Activated CD4-positive, alpha-beta T cell treated with anti-CD3 and anti-CD28 coated beads for 36 hours (primary cell): ENCODE measurements at regions of chr20 and their contacts with region 1.

Region 1: GRCh38 chr20:59120491-59120890 is 43.1 kb upstream of the ZNF831 start:
- DNase-seq: peak; percentile 43
- ATAC-seq: peak; percentile 10
- H3K4me3 Mint-ChIP-seq: peak overlapping the region; percentile 22
- H3K27ac Mint-ChIP-seq: peak overlapping the region; percentile 71
- H3K4me1 Mint-ChIP-seq: peaks cover 78% of the 10 kb centered on the region
- H3K27me3 Mint-ChIP-seq: no peaks in the 10 kb centered on the region

Region 2: DNA sequence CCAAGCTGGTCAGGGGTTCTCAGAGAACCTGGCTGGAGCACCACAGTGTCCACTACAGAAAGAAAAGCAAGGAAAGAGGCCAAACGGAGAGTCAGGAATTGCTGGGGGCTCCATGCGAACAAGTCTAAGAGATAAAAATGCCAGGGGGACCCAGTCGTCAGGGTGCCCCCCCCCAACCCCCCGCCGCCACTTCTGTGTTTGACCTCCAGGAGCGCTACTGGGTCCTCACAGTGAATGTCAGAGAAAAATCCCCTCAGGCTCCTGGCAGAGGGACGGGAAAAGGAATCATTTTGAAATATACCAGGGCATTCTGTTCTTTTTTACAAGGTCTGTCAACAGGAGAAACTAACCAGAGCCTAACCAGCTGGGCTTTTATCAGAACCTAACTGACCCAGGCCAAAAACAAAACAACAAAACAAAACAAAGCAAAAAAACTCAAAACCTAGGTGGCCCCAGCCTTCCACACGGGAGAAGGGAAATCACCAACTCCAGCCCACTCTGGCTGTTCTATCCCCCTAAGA is 157.4 kb before region 1 on chr20:
- CTCF ChIA-PET with region 1: no interaction called
- POLR2A ChIA-PET with region 1: no interaction called
- intact Hi-C with region 1: no loop called
- DNase-seq: no peak
- ATAC-seq: no peak
- H3K4me3 Mint-ChIP-seq: no peak overlapping the region
- H3K27ac Mint-ChIP-seq: no peak overlapping the region
- H3K4me1 Mint-ChIP-seq: no peaks in the 10 kb centered on the region
- H3K27me3 Mint-ChIP-seq: peaks cover 6% of the 10 kb centered on the region

Region 3: DNA sequence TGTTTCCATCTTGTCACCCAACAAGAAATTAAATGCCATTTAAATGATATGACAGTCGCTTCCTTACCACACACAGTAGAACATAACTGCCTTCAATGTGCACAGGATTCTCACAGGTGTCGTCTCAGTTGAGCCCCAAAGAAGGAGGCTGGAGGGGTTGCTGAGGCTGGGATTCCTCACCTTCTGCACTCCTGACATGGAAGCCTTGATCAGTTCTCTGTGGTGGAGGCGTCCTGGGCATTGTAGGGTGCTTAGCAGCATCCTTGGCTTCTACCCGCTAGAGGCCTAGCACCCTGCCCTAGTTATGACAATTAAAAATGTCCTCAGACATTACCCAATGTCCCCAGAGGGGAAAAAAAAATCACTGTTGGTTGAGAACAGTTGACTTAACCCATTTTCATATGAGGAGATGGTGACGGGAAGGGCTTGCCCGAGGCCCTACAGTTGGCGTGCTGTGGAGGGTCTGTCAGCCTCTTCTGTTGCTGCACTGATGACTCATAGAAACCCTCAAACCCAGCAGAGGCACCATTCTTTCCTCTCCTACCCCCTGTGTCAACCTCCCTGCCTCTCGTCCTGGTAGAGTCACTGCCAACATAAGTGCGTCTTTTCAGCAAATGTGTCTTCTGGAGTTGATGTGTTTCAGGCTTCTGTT is 23.8 kb after region 1 on chr20:
- CTCF ChIA-PET with region 1: interaction called, 15 read pairs
- POLR2A ChIA-PET with region 1: no interaction called
- intact Hi-C with region 1: loop called (anchors 1 kb)
- DNase-seq: peak; percentile 75
- ATAC-seq: peak; percentile 79
- H3K4me3 Mint-ChIP-seq: peak overlapping the region; percentile 36
- H3K27ac Mint-ChIP-seq: peak overlapping the region; percentile 99
- H3K4me1 Mint-ChIP-seq: peaks cover 56% of the 10 kb centered on the region
- H3K27me3 Mint-ChIP-seq: no peaks in the 10 kb centered on the region

Region 4: GRCh38 chr20:59149651-59150504 is 29.4 kb after region 1 on chr20:
- CTCF ChIA-PET with region 1: interaction called, 29 read pairs
- POLR2A ChIA-PET with region 1: interaction called, 3 read pairs
- intact Hi-C with region 1: no loop called
- DNase-seq: peak; percentile 82
- ATAC-seq: peak; percentile 42
- H3K4me3 Mint-ChIP-seq: peak overlapping the region; percentile 58
- H3K27ac Mint-ChIP-seq: peak overlapping the region; percentile 95
- H3K4me1 Mint-ChIP-seq: peaks cover 96% of the 10 kb centered on the region
- H3K27me3 Mint-ChIP-seq: no peaks in the 10 kb centered on the region